H1 (cell line): ENCODE measurements at regions of chr1 and their contacts with region 1.

Region 1: GRCh38 chr1:52348704-52349300 is 17.2 kb downstream of the CC2D1B start:
- DNase-seq: peak; percentile 51 to 63
- H3K4me3 ChIP-seq: no peak overlapping the region
- H3K27ac ChIP-seq: no peak overlapping the region
- H3K4me1 ChIP-seq: peaks cover 1 to 12% (median 4%) of the 10 kb centered on the region in 4 experiments; a peak in 5 of 7 replicates
- H3K27me3 ChIP-seq: no peaks in the 10 kb centered on the region
- CTCF ChIP-seq: peak; percentile 71 to 84 (median 78)
- EP300 ChIP-seq: no peak
- POLR2A ChIP-seq: no peak
- RAD21 ChIP-seq: peak; percentile 90 to 94

Region 2: DNA sequence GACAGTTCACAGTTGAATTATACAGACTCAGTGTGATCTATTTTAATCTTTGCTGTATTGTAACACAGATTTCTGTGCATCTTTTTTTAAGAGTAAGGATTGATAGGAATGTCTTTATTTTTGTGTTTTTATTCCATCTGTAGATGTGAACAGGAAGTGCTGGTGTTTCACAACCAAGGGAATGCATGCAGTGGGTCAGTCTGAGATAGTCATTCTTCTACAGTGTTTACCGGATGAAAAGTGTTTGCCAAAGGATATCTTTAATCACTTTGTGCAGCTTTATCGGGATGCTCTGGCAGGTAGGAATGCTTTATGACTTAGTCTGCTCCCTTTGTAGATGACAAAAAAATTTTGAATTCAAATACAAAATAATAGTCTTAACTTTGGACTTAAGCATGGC is 67.3 kb before region 1 on chr1:
- CTCF ChIA-PET with region 1: no interaction called
- POLR2A ChIA-PET with region 1: no interaction called
- DNase-seq: no peak
- H3K4me3 ChIP-seq: no peak overlapping the region
- H3K27ac ChIP-seq: no peak overlapping the region
- H3K4me1 ChIP-seq: no peaks in the 10 kb centered on the region
- H3K27me3 ChIP-seq: no peaks in the 10 kb centered on the region
- CTCF ChIP-seq: no peak
- EP300 ChIP-seq: no peak
- POLR2A ChIP-seq: no peak
- RAD21 ChIP-seq: no peak

Region 3: DNA sequence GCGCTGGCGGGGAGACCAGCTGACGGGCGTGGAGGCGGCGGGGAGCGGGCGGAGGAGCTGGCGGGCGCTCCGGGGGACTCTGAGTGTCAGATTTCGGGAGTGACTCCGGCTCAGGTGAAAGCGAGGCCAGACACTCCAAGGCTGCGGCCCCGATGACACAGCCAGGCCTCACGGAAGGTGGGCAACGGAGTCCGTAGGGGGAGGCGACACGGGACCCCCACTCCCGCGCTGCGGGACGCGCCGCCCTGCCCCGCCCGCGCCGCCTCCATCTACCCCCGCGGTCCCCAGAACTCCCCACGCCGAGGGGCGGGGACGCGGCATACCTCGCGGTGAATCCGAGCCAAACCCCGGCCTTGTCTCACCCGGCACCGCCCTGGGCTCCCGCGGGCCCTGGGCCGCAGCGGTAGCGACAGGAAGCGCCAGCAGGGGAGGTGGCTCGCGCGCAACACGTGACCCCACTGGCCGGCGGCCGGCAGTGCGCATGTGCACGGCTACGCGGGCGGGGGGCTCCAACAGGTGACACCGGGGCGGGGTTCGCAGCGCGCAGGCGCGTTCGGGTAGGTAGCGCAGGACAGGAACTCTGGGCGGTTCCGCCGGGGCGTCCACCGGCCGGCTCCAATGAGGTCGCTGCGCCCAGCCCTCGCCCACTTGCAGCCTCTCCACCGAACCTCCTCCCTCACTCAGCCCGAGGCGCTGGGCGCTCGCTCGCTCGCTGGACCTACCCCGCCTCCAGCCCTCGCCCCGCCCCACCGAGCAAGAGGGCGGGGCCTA is 17.1 kb after region 1 on chr1 and contains the start of gene CC2D1B:
- CTCF ChIA-PET with region 1: interaction called, 9 read pairs
- POLR2A ChIA-PET with region 1: interaction called, 20 read pairs
- DNase-seq: peak; percentile 99 to 100
- H3K4me3 ChIP-seq: peak within 1 kb of the TSS; percentile 76 to 92 (median 86)
- H3K27ac ChIP-seq: peak within 1 kb of the TSS; percentile 20; the same call in 1 of the 2 replicates
- H3K4me1 ChIP-seq: peaks cover 0 to 9% (median 5%) of the 10 kb centered on the region in 4 experiments
- H3K27me3 ChIP-seq: no peaks in the 10 kb centered on the region
- CTCF ChIP-seq: no peak
- EP300 ChIP-seq: no peak
- POLR2A ChIP-seq: peak in 1 of 2 experiments; percentile 80; a peak in 2 of 3 replicates
- RAD21 ChIP-seq: no peak; a peak in 1 of 4 replicates
- total RNA-seq, gene CC2D1B: 13.1 and 13.8 TPM in 2 replicates

Region 4: DNA sequence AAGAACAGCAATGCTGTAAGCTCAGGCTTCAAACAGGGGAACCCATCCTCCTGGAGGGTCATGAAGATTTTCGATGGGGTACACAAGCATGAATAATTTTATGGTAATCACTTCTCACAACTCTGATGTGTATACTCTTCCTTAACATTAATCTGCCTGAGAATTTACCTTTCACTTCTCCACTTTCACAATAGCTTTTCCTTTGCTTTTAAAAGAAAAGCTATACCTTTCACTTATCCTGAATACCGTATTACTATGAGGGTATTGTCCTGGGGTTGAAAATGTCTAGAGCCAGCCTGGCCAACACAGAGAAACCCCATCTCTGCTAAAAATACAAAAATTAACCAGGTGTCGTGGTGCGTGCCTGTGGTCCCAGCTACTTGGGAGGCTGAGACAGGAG is 364.8 kb after region 1 on chr1:
- CTCF ChIA-PET with region 1: no interaction called
- POLR2A ChIA-PET with region 1: no interaction called
- DNase-seq: no peak
- H3K4me3 ChIP-seq: no peak overlapping the region
- H3K27ac ChIP-seq: no peak overlapping the region
- H3K4me1 ChIP-seq: no peaks in the 10 kb centered on the region
- H3K27me3 ChIP-seq: no peaks in the 10 kb centered on the region
- CTCF ChIP-seq: no peak
- EP300 ChIP-seq: no peak
- POLR2A ChIP-seq: no peak
- RAD21 ChIP-seq: no peak